CD8-positive, alpha-beta T cell (primary cell): ENCODE measurements at regions of chr20 and their contacts with region 1.

Region 1: GRCh38 chr20:32004962-32005361 is 5.3 kb upstream of the CCM2L start:
- DNase-seq: no peak
- ATAC-seq: no peak
- H3K4me3 ChIP-seq: no peak overlapping the region
- H3K4me3 Mint-ChIP-seq: no peak overlapping the region
- H3K27ac ChIP-seq: no peak overlapping the region
- H3K27ac Mint-ChIP-seq: no peak overlapping the region
- H3K4me1 ChIP-seq: no peaks in the 10 kb centered on the region
- H3K4me1 Mint-ChIP-seq: no peaks in the 10 kb centered on the region
- H3K27me3 ChIP-seq: no peaks in the 10 kb centered on the region
- H3K27me3 Mint-ChIP-seq: peaks cover 7% of the 10 kb centered on the region
- CTCF ChIP-seq: no peak

Region 2: GRCh38 chr20:32019075-32019491 is 14.1 kb after region 1 on chr20:
- CTCF ChIA-PET with region 1: no interaction called
- POLR2A ChIA-PET with region 1: no interaction called
- intact Hi-C with region 1: no loop called
- DNase-seq: peak in 1 of 9 experiments; percentile 13
- ATAC-seq: peak; percentile 12
- H3K4me3 ChIP-seq: no peak overlapping the region
- H3K4me3 Mint-ChIP-seq: no peak overlapping the region
- H3K27ac ChIP-seq: no peak overlapping the region
- H3K27ac Mint-ChIP-seq: no peak overlapping the region
- H3K4me1 ChIP-seq: peaks cover 17% of the 10 kb centered on the region
- H3K4me1 Mint-ChIP-seq: peaks cover 21% of the 10 kb centered on the region
- H3K27me3 ChIP-seq: peaks cover 18 to 25% of the 10 kb centered on the region in 2 experiments
- H3K27me3 Mint-ChIP-seq: peaks cover 76% of the 10 kb centered on the region
- CTCF ChIP-seq: no peak

Region 3: GRCh38 chr20:32421290-32421689 is 416.3 kb after region 1 on chr20:
- CTCF ChIA-PET with region 1: no interaction called
- POLR2A ChIA-PET with region 1: no interaction called
- intact Hi-C with region 1: loop called in 1 of 2 experiments (anchors 5 kb)
- DNase-seq: no peak
- ATAC-seq: no peak
- H3K4me3 ChIP-seq: no peak overlapping the region
- H3K4me3 Mint-ChIP-seq: no peak overlapping the region
- H3K27ac ChIP-seq: no peak overlapping the region
- H3K27ac Mint-ChIP-seq: no peak overlapping the region
- H3K4me1 ChIP-seq: peaks cover 4% of the 10 kb centered on the region
- H3K4me1 Mint-ChIP-seq: peaks cover 38% of the 10 kb centered on the region
- H3K27me3 ChIP-seq: no peaks in the 10 kb centered on the region
- H3K27me3 Mint-ChIP-seq: no peaks in the 10 kb centered on the region
- CTCF ChIP-seq: no peak